Heart left ventricle (tissue), 16 donors: ENCODE measurements at regions of chr15 and their contacts with region 1.

Region 1: GRCh38 chr15:93250950-93251349 is 161.9 kb upstream of the RGMA start:
- DNase-seq: peak in 4 of 5 donors; percentile 62 to 74 (median 70)
- ATAC-seq: peak; percentile 35 to 81 (median 68)
- H3K4me3 ChIP-seq: no peak overlapping the region
- H3K27ac ChIP-seq: peak overlapping the region in 7 of 12 donors; percentile 13 to 65 (median 43)
- H3K4me1 ChIP-seq: peaks cover 0 to 44% (median 10%) of the 10 kb centered on the region in 12 donors
- H3K27me3 ChIP-seq: no peaks in the 10 kb centered on the region
- CTCF ChIP-seq: peak in 2 of 12 donors; percentile 16 to 42
- POLR2A ChIP-seq: no peak

Region 2: DNA sequence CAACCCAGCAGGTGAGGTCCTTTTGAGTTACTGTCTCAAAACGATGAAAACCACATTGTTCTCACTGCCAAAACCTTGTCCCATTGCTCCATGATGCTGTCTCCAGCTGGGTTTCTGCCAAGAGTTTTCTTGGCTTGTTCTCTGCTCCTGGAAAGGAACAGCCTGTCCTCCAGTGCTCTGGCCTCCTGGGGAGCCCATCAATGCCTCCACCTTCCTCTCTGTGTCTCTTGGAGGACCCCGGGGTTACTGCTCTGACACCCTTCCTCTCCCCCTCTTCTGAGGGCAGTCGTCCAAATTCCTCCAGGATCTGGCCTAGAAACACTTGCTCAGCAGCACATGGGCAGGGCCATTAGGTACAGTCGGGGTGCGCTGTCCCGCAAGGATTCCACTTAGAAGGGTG is 98.0 kb before region 1 on chr15:
- intact Hi-C with region 1: loop called in 2 of 10 experiments (anchors 2 kb)
- DNase-seq: peak; percentile 71 to 85 (median 77)
- ATAC-seq: peak; percentile 87 to 95 (median 92)
- H3K4me3 ChIP-seq: no peak overlapping the region
- H3K27ac ChIP-seq: peak overlapping the region in 2 of 12 donors; percentile 13 to 48
- H3K4me1 ChIP-seq: peaks cover 0 to 32% (median 16%) of the 10 kb centered on the region in 12 donors
- H3K27me3 ChIP-seq: no peaks in the 10 kb centered on the region
- CTCF ChIP-seq: no peak
- POLR2A ChIP-seq: no peak

Region 3: GRCh38 chr15:93288728-93289294 is 37.9 kb after region 1 on chr15:
- intact Hi-C with region 1: no loop called
- DNase-seq: no peak
- ATAC-seq: no peak
- H3K4me3 ChIP-seq: no peak overlapping the region
- H3K27ac ChIP-seq: peak overlapping the region in 1 of 12 donors; percentile 19
- H3K4me1 ChIP-seq: peaks cover 0 to 2% (median 0%) of the 10 kb centered on the region in 12 donors
- H3K27me3 ChIP-seq: peaks cover 0 to 4% (median 0%) of the 10 kb centered on the region in 9 donors
- CTCF ChIP-seq: no peak
- POLR2A ChIP-seq: no peak

Region 4: GRCh38 chr15:93321881-93322289 is 70.9 kb after region 1 on chr15:
- intact Hi-C with region 1: loop called in 1 of 10 experiments (anchors 10 kb)
- DNase-seq: no peak
- ATAC-seq: no peak
- H3K4me3 ChIP-seq: no peak overlapping the region
- H3K27ac ChIP-seq: no peak overlapping the region
- H3K4me1 ChIP-seq: no peaks in the 10 kb centered on the region
- H3K27me3 ChIP-seq: no peaks in the 10 kb centered on the region
- CTCF ChIP-seq: no peak
- POLR2A ChIP-seq: no peak

Region 5: GRCh38 chr15:93438310-93438709 is 187.4 kb after region 1 on chr15:
- intact Hi-C with region 1: no loop called
- DNase-seq: no peak
- ATAC-seq: no peak
- H3K4me3 ChIP-seq: no peak overlapping the region
- H3K27ac ChIP-seq: no peak overlapping the region
- H3K4me1 ChIP-seq: no peaks in the 10 kb centered on the region
- H3K27me3 ChIP-seq: peaks cover 0 to 8% (median 0%) of the 10 kb centered on the region in 9 donors
- CTCF ChIP-seq: no peak
- POLR2A ChIP-seq: no peak